Activated naive CD8-positive, alpha-beta T cell treated with anti-CD3 and anti-CD28 coated beads, Interleukin-2, amount 10 ng/mL, durations not matched to agents 7 days and 5 days (primary cell): ENCODE measurements at regions of chr9 and their contacts with region 1.

Region 1: GRCh38 chr9:124868511-124869465 is 6.9 kb downstream of the ARPC5L start:
- DNase-seq: peak; percentile 97
- ATAC-seq: peak; percentile 72
- H3K4me3 Mint-ChIP-seq: peak overlapping the region; percentile 98
- H3K27ac Mint-ChIP-seq: peak overlapping the region; percentile 98
- H3K4me1 Mint-ChIP-seq: peaks cover 38% of the 10 kb centered on the region
- H3K27me3 Mint-ChIP-seq: no peaks in the 10 kb centered on the region

Region 2: GRCh38 chr9:124839612-124840299 is 29.0 kb before region 1 on chr9:
- POLR2A ChIA-PET with region 1: no interaction called
- DNase-seq: no peak
- ATAC-seq: no peak
- H3K4me3 Mint-ChIP-seq: no peak overlapping the region
- H3K27ac Mint-ChIP-seq: no peak overlapping the region
- H3K4me1 Mint-ChIP-seq: no peaks in the 10 kb centered on the region
- H3K27me3 Mint-ChIP-seq: peaks cover 16% of the 10 kb centered on the region

Region 3: GRCh38 chr9:124879226-124879625 is 10.4 kb after region 1 on chr9:
- POLR2A ChIA-PET with region 1: interaction called, 15 read pairs
- DNase-seq: no peak
- ATAC-seq: no peak
- H3K4me3 Mint-ChIP-seq: no peak overlapping the region
- H3K27ac Mint-ChIP-seq: peak overlapping the region; percentile 13
- H3K4me1 Mint-ChIP-seq: peaks cover 4% of the 10 kb centered on the region
- H3K27me3 Mint-ChIP-seq: no peaks in the 10 kb centered on the region

Region 4: DNA sequence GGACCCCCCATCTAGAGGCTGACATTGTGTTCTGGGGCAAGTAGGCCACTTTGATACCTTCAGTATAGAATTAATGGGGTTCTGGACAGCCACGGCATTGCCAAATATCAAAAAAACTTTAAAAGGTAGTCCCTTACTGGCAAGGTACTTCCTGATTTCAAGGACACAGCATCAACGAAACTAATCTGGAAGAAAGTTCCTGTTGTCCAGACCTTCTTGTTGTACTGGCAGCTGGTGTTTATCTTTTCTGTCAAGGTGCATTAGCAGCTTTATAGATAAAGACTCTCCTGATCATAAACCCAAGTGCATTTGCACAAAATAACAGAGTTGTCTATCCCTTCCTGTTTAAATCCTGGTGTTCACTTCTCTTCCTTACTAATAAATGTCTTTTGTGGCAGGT is 95.8 kb after region 1 on chr9:
- POLR2A ChIA-PET with region 1: interaction called, 13 read pairs
- DNase-seq: no peak
- ATAC-seq: no peak
- H3K4me3 Mint-ChIP-seq: peak overlapping the region; percentile 9
- H3K27ac Mint-ChIP-seq: peak overlapping the region; percentile 92
- H3K4me1 Mint-ChIP-seq: peaks cover 18% of the 10 kb centered on the region
- H3K27me3 Mint-ChIP-seq: no peaks in the 10 kb centered on the region